MCF 10A (cell line): ENCODE measurements at regions of chr1 and their contacts with region 1.

Region 1: DNA sequence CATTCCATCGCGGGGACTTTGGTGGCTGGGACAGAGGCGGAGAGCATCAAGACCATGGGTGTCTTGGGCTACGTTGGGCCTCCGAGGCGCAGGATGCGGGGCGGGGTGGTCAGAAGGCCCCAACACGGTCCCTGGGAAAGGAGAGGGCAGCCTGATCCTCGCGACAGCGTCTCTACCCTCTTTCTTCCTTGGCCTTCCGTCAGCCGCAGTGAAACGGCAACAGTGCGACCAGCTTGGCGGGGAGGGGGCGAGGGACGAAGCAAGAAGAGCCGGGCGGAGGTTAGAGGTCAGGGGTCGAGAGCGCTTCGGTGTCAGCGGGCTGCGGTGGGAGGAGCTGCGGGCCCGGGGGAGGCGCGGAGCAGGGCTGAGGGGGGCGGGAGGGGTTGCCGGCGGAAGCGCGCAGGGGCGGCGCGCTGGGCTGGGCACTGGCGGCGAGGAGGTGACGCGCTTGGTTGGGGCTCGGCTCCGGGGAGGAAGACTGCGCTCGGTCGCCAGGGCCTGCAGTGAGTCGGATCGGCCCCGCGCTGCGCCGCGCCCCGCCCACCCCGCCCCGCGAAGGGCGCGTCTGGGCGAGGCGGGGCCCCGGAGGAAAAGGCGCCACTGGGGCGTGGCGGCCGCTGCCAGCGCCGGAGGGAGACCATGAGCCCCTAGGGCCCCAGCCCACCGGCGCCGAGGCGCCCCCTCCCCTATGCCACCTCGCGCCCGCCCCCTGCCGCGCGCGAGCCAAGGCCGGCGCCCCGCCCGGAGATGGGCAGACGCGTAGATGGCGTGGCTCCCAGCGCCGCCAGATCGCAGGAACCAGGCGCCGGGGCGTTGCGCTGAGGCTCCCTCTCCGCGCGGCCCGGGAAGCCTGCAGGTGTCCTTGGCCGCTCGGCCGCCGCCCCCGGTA is at the start of gene KCNC4:
- DNase-seq: peak; percentile 56
- H3K4me3 Mint-ChIP-seq: peak within 1 kb of the TSS; percentile 72
- H3K27ac Mint-ChIP-seq: no peak within 1 kb of the TSS
- H3K4me1 Mint-ChIP-seq: peaks cover 5% of the 10 kb centered on the region
- H3K27me3 Mint-ChIP-seq: no peaks in the 10 kb centered on the region
- CTCF ChIP-seq: no peak
- total RNA-seq, gene KCNC4: 1.1 and 1.3 TPM in 2 replicates

Region 2: DNA sequence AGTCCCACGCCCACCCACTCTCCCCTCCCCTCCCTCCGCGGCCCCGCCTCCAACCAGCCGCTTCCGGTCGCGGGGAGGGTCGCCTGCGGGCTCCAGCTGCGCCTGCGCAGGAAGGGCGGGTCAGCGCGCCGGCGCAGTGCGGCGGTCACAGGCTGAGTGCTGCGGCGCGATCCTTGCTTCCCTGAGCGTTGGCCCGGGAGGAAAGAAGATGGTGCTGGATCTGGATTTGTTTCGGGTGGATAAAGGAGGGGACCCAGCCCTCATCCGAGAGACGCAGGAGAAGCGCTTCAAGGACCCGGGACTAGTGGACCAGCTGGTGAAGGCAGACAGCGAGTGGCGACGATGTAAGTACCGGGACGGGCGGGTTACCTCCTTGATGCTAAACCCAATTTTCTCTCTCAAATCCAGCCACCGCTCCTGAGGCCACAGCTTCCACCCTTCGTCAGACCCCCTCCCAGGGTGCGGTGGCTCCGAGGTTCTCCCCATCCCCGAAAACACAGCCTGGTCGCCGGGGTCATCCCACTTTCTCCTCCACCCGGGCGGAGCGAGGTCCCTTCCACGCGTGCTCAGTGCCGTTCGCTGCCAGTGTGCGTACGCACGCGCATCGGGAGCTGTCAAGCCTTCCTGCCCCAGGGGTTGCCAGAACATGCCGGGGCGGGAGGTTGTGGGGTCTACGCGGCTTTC is 996.0 kb before region 1 on chr1 and contains the start of gene SARS1:
- CTCF ChIA-PET with region 1: no interaction called
- POLR2A ChIA-PET with region 1: no interaction called
- intact Hi-C with region 1: no loop called
- DNase-seq: peak; percentile 85
- H3K4me3 Mint-ChIP-seq: peak within 1 kb of the TSS; percentile 98
- H3K27ac Mint-ChIP-seq: peak within 1 kb of the TSS; percentile 98
- H3K4me1 Mint-ChIP-seq: peaks cover 33% of the 10 kb centered on the region
- H3K27me3 Mint-ChIP-seq: no peaks in the 10 kb centered on the region
- CTCF ChIP-seq: no peak
- total RNA-seq, gene SARS1: 381 and 492 TPM in 2 replicates

Region 3: GRCh38 chr1:109667452-109668122 is 542.4 kb before region 1 on chr1 and contains the start of gene GSTM2:
- CTCF ChIA-PET with region 1: no interaction called
- POLR2A ChIA-PET with region 1: no interaction called
- intact Hi-C with region 1: no loop called
- DNase-seq: no peak
- H3K4me3 Mint-ChIP-seq: no peak within 1 kb of the TSS
- H3K27ac Mint-ChIP-seq: no peak within 1 kb of the TSS
- H3K4me1 Mint-ChIP-seq: no peaks in the 10 kb centered on the region
- H3K27me3 Mint-ChIP-seq: no peaks in the 10 kb centered on the region
- CTCF ChIP-seq: no peak
- total RNA-seq, gene GSTM2: 0.70 and 1.4 TPM in 2 replicates

Region 4: GRCh38 chr1:110158261-110158660 is 51.7 kb before region 1 on chr1:
- CTCF ChIA-PET with region 1: no interaction called
- POLR2A ChIA-PET with region 1: no interaction called
- intact Hi-C with region 1: no loop called
- DNase-seq: no peak
- H3K4me3 Mint-ChIP-seq: no peak overlapping the region
- H3K27ac Mint-ChIP-seq: no peak overlapping the region
- H3K4me1 Mint-ChIP-seq: no peaks in the 10 kb centered on the region
- H3K27me3 Mint-ChIP-seq: peaks cover 45% of the 10 kb centered on the region
- CTCF ChIP-seq: no peak

Region 5: GRCh38 chr1:110196917-110197765 is 12.8 kb before region 1 on chr1:
- CTCF ChIA-PET with region 1: interaction called, 31 read pairs
- POLR2A ChIA-PET with region 1: no interaction called
- intact Hi-C with region 1: no loop called
- DNase-seq: peak; percentile 54
- H3K4me3 Mint-ChIP-seq: no peak overlapping the region
- H3K27ac Mint-ChIP-seq: no peak overlapping the region
- H3K4me1 Mint-ChIP-seq: no peaks in the 10 kb centered on the region
- H3K27me3 Mint-ChIP-seq: no peaks in the 10 kb centered on the region
- CTCF ChIP-seq: peak; percentile 89

Region 6: DNA sequence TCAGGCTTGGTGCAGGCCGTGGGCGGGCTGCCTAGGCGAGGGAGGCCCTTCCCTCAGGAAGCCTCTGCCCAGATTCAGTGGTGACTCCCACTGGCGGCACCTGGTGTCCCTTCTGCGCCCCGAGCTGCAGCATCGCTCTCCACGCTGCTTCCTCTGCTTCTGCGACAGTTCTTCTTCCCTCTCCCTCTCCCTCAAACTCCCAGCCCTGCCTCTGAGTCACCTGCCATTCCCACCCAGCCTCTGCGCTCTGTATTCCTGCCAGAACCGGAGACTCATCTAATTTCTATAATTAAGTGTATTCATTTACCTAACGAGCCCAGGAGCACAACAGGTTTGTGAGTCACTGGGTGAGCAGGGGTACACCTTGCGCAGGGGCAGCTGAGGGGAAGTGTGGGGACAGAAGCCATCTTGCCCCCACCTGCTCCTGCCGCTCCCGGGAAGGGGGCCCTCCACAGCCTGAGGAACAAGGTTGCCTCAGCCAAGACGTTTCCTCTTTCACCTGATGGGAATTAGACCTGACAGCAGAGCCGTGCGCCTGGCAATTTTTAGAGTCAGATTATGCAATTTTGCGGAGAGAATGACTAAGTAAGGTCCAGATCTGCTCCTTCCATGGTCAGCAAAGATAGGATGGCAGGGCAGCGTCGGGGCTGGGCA is 19.5 kb after region 1 on chr1:
- CTCF ChIA-PET with region 1: interaction called, 10 read pairs
- POLR2A ChIA-PET with region 1: no interaction called
- intact Hi-C with region 1: no loop called
- DNase-seq: peak; percentile 83
- H3K4me3 Mint-ChIP-seq: peak overlapping the region; percentile 55
- H3K27ac Mint-ChIP-seq: peak overlapping the region; percentile 56
- H3K4me1 Mint-ChIP-seq: peaks cover 16% of the 10 kb centered on the region
- H3K27me3 Mint-ChIP-seq: no peaks in the 10 kb centered on the region
- CTCF ChIP-seq: no peak

Region 7: GRCh38 chr1:110243574-110243973 is 33.6 kb after region 1 on chr1:
- CTCF ChIA-PET with region 1: interaction called, 24 read pairs
- POLR2A ChIA-PET with region 1: no interaction called
- intact Hi-C with region 1: no loop called
- DNase-seq: no peak
- H3K4me3 Mint-ChIP-seq: no peak overlapping the region
- H3K27ac Mint-ChIP-seq: peak overlapping the region; percentile 28
- H3K4me1 Mint-ChIP-seq: no peaks in the 10 kb centered on the region
- H3K27me3 Mint-ChIP-seq: no peaks in the 10 kb centered on the region
- CTCF ChIP-seq: no peak

Region 8: GRCh38 chr1:110292031-110292741 is 82.2 kb after region 1 on chr1:
- CTCF ChIA-PET with region 1: interaction called, 1,128 read pairs
- POLR2A ChIA-PET with region 1: no interaction called
- intact Hi-C with region 1: no loop called
- DNase-seq: peak; percentile 36
- H3K4me3 Mint-ChIP-seq: no peak overlapping the region
- H3K27ac Mint-ChIP-seq: no peak overlapping the region
- H3K4me1 Mint-ChIP-seq: peaks cover 19% of the 10 kb centered on the region
- H3K27me3 Mint-ChIP-seq: no peaks in the 10 kb centered on the region
- CTCF ChIP-seq: no peak

Region 9: DNA sequence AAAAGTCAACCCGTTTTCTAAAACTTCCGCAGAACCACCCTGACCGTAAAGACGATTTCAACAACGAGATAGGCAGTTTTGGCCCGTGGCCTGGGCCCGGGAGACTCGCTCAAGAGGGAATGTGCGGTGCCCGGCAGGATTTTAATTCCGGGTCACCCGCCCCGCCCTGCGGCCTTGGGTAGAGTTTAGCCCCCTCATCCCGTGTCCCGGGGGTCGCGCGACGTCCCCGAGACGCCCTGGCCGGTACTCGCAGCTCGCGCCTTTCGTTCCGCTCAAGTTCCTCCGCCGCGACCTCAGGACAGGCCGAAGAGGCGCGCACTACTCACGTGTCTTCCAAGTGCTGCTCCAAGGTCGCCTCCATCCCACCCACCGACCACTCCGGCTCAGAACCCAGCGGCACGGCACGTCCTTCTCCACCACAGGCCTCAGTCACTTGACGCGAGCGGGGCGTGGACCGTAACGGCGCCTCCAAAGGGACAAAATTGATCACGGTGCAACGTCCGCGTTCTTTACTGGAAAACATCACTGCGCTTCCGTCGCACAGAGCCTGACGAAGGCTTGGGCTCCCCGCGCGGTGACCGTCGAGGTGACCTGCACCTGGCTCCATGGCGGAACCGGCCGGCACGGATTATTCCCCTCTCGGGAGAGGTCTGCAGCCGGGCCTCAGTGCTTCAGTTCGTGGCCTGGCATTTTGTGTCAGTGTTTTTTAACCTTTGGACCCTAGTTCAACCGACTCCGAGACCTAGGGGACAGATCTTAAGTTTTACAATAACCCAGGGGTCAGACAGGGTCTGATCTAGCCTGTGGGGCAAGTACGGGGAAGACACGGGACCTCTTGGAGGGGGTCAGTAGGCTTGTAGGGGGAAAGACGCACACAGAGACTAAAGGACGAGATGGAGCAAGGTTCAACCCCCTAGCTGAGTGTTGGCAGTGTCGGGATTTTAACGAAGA is 197.6 kb after region 1 on chr1 and contains the start of gene LAMTOR5:
- CTCF ChIA-PET with region 1: interaction called, 56 read pairs
- POLR2A ChIA-PET with region 1: no interaction called
- intact Hi-C with region 1: no loop called
- DNase-seq: peak; percentile 90
- H3K4me3 Mint-ChIP-seq: peak within 1 kb of the TSS; percentile 100
- H3K27ac Mint-ChIP-seq: peak within 1 kb of the TSS; percentile 100
- H3K4me1 Mint-ChIP-seq: peaks cover 9% of the 10 kb centered on the region
- H3K27me3 Mint-ChIP-seq: no peaks in the 10 kb centered on the region
- CTCF ChIP-seq: no peak
- total RNA-seq, gene LAMTOR5: 111 and 127 TPM in 2 replicates

Region 10: DNA sequence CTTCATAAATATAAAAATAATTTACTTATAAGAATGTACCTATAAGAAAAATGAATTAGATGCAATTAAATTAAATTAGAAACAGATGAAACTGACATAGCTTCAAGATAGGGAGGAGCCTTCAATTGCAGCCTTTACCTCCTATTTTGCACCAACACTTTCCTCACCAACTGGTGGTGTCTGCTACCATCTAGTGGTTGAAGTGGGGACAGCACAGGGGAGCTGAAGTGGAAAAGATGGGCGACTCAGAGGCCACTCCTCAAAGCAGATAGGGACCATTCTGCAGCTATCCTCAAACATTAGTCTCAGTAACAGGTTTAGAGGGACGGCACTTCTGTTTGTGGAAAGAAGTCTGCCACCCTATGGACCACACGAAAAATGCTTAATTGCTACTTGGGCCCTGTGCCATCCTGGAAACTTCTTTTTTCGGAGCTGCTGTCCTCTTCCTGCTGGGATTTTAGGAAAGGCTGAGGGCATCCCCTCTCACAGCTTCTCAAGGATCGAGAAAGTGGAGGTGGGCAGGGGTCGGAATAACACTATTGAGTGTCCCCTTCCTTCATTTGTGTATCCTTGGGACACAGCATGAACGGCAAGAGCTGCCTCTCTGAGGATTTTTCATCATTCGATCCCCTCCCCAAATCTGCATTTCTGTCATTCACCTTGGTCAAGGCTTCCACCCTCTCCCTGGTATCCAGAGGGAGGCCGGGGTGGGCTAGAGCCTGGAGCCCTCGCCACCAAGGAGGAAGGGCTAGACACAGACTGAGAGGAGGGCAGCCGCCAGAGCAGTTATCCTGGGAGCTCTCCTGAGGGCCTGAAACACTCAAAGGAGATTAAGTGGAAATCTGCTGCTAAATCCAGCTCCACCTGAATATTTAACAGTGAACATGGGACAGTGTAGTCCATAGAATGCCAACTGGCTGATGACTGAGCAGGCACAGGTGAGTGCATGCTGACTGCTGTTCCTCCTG is 250.6 kb after region 1 on chr1:
- CTCF ChIA-PET with region 1: interaction called, 304 read pairs
- POLR2A ChIA-PET with region 1: interaction called, 5 read pairs
- intact Hi-C with region 1: loop called (anchors 1 kb)
- DNase-seq: peak; percentile 86
- H3K4me3 Mint-ChIP-seq: no peak overlapping the region
- H3K27ac Mint-ChIP-seq: no peak overlapping the region
- H3K4me1 Mint-ChIP-seq: peaks cover 11% of the 10 kb centered on the region
- H3K27me3 Mint-ChIP-seq: no peaks in the 10 kb centered on the region
- CTCF ChIP-seq: peak; percentile 97

Region 11: DNA sequence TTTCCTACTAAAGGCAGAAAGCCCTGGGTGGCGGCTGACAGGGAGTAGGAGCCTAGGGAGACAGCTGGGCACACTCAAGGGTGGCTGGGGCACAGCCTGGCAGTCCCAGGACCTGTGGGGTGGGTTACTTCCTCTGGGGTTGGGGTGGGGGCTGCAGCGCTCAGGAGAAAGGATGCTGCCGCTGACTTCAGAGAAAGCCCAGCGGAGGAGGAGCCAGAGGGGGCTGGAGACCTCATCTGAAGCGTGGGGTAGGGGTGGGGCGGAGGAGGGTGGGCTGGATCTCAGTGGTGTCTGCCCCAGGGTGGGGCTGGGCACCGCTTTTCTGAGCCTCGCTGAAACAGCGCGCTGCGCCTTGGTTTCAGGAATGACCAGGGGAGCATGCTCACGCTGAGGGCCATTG is 278.2 kb after region 1 on chr1:
- CTCF ChIA-PET with region 1: no interaction called
- POLR2A ChIA-PET with region 1: no interaction called
- intact Hi-C with region 1: no loop called
- DNase-seq: no peak
- H3K4me3 Mint-ChIP-seq: no peak overlapping the region
- H3K27ac Mint-ChIP-seq: no peak overlapping the region
- H3K4me1 Mint-ChIP-seq: peaks cover 7% of the 10 kb centered on the region
- H3K27me3 Mint-ChIP-seq: peaks cover 10% of the 10 kb centered on the region
- CTCF ChIP-seq: no peak